ENCODE measurements at regions of chr5 and their contacts with region 1.

Region 1: GRCh38 chr5:87081511-87082372 is 185.9 kb upstream of the RASA1 start:
- DNase-seq: peak in 8 of 9 donors; percentile 11 to 59 (median 44)
- ATAC-seq: peak; percentile 84
- H3K4me3 ChIP-seq: no peak overlapping the region
- H3K4me3 Mint-ChIP-seq: peak overlapping the region; percentile 42 to 86 (median 72)
- H3K27ac ChIP-seq: no peak overlapping the region
- H3K27ac Mint-ChIP-seq: peak overlapping the region; percentile 53 to 85 (median 68)
- H3K4me1 ChIP-seq: peaks cover 18 to 35% of the 10 kb centered on the region in 2 donors
- H3K4me1 Mint-ChIP-seq: peaks cover 20 to 60% (median 51%) of the 10 kb centered on the region in 7 donors
- H3K27me3 ChIP-seq: no peaks in the 10 kb centered on the region
- H3K27me3 Mint-ChIP-seq: no peaks in the 10 kb centered on the region

Region 2: DNA sequence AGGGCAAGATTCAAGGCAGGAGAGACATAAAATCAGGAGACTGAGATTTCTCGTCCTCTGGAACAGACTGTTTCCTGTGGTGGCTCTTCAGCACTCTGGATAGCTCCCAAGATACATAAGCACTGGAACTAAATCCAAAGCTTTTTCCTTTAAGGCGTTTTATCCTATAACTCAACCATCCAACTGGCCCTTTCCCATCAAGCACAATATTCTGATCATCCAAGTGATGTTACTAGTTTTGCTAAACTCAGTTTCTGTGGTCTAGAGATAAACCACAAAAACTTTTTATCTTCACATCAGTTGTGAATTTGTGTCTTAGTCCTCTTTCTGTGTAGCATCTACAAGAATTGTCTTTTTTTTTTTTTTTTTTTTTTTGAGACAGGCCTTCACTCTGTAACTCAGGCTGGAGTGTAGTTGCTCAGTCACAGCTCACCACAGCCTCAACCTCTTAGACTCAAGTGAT is 164.6 kb before region 1 on chr5:
- CTCF ChIA-PET with region 1: no interaction called
- POLR2A ChIA-PET with region 1: no interaction called
- intact Hi-C with region 1: loop called in 1 of 2 experiments (anchors 2 kb)
- DNase-seq: peak in 1 of 9 donors; percentile 1
- ATAC-seq: no peak
- H3K4me3 ChIP-seq: no peak overlapping the region
- H3K4me3 Mint-ChIP-seq: peak overlapping the region in 1 of 10 donors; percentile 54
- H3K27ac ChIP-seq: no peak overlapping the region
- H3K27ac Mint-ChIP-seq: peak overlapping the region in 1 of 9 donors; percentile 32
- H3K4me1 ChIP-seq: no peaks in the 10 kb centered on the region
- H3K4me1 Mint-ChIP-seq: peaks cover 0 to 17% (median 0%) of the 10 kb centered on the region in 7 donors
- H3K27me3 ChIP-seq: no peaks in the 10 kb centered on the region
- H3K27me3 Mint-ChIP-seq: peaks cover 0 to 21% (median 7%) of the 10 kb centered on the region in 5 donors

Region 3: DNA sequence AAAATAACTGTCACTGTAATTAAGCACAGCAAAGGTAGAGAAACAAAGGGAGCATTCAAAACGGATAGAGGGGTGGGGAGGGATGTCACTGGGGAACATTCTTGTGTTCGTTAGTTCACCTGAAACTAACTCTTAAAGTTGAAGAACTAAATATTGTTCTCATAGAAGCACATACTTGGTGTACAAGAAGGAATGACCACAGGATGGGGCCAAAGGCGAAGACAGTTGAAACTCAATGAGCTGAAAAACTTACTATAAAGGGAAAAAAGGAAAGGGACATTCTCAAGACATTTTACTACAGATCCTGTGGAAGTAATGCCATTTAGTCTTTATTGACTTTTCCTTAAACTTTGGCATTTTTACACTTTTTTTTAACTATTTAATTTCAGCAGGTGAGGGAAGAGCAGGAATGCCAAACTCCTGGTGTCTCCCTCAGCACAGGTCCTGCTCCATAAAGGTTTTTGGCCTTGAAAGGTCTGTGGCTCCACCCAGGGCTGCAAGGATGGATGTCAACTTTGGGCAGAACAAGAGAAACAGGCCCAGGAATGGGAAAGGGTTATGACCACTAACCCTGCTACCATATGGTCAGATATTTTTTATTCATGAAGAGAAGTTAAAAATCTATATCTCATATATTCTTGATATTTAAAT is 11.6 kb before region 1 on chr5:
- CTCF ChIA-PET with region 1: no interaction called
- POLR2A ChIA-PET with region 1: no interaction called
- intact Hi-C with region 1: loop called in 1 of 2 experiments (anchors 1 kb)
- DNase-seq: no peak
- ATAC-seq: no peak
- H3K4me3 ChIP-seq: no peak overlapping the region
- H3K4me3 Mint-ChIP-seq: no peak overlapping the region
- H3K27ac ChIP-seq: no peak overlapping the region
- H3K27ac Mint-ChIP-seq: peak overlapping the region in 2 of 9 donors; percentile 15 to 38
- H3K4me1 ChIP-seq: peaks cover 7 to 24% of the 10 kb centered on the region in 2 donors
- H3K4me1 Mint-ChIP-seq: peaks cover 10 to 27% (median 20%) of the 10 kb centered on the region in 7 donors
- H3K27me3 ChIP-seq: no peaks in the 10 kb centered on the region
- H3K27me3 Mint-ChIP-seq: no peaks in the 10 kb centered on the region

Region 4: GRCh38 chr5:87094347-87094746 is 12.6 kb after region 1 on chr5:
- CTCF ChIA-PET with region 1: interaction called, 3 read pairs
- POLR2A ChIA-PET with region 1: no interaction called
- intact Hi-C with region 1: loop called in 1 of 2 experiments (anchors 2 kb)
- DNase-seq: no peak
- ATAC-seq: no peak
- H3K4me3 ChIP-seq: no peak overlapping the region
- H3K4me3 Mint-ChIP-seq: peak overlapping the region in 2 of 10 donors; percentile 1 to 33
- H3K27ac ChIP-seq: no peak overlapping the region
- H3K27ac Mint-ChIP-seq: peak overlapping the region in 7 of 9 donors; percentile 1 to 68 (median 28)
- H3K4me1 ChIP-seq: peaks cover 4 to 8% of the 10 kb centered on the region in 2 donors
- H3K4me1 Mint-ChIP-seq: peaks cover 0 to 31% (median 17%) of the 10 kb centered on the region in 7 donors
- H3K27me3 ChIP-seq: no peaks in the 10 kb centered on the region
- H3K27me3 Mint-ChIP-seq: peaks cover 0 to 20% (median 0%) of the 10 kb centered on the region in 5 donors

Region 5: DNA sequence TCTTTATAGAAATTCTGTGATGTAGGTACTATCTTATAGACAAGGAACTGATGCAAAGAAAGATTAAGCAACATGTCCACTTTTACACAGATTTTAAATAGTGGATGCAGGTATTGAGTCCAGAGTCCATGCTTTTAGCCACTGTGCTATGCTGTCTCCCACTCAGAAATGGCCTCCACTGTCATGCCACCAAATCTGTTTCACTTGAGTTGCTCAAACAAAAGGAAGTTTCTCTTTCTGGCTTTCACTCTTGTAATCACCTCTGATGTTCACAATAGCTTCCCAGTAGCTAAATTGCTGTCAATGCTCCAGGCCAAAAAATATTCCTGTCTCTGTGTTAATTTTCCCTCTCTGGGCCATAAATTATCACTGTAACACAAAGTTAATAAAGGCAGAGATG is 108.9 kb after region 1 on chr5:
- CTCF ChIA-PET with region 1: no interaction called
- POLR2A ChIA-PET with region 1: no interaction called
- intact Hi-C with region 1: loop called in 1 of 2 experiments (anchors 5 kb)
- DNase-seq: no peak
- ATAC-seq: no peak
- H3K4me3 ChIP-seq: no peak overlapping the region
- H3K4me3 Mint-ChIP-seq: no peak overlapping the region
- H3K27ac ChIP-seq: no peak overlapping the region
- H3K27ac Mint-ChIP-seq: no peak overlapping the region
- H3K4me1 ChIP-seq: peaks cover 4 to 5% of the 10 kb centered on the region in 2 donors
- H3K4me1 Mint-ChIP-seq: peaks cover 8 to 30% (median 17%) of the 10 kb centered on the region in 7 donors
- H3K27me3 ChIP-seq: no peaks in the 10 kb centered on the region
- H3K27me3 Mint-ChIP-seq: no peaks in the 10 kb centered on the region